ENCODE measurements at regions of chr12 and their contacts with region 1.

Region 1: GRCh38 chr12:74537707-74538385 is at the start of gene ATXN7L3B:
- DNase-seq: peak; percentile 96
- H3K4me3 ChIP-seq: peak within 1 kb of the TSS; percentile 63 to 96 (median 74)
- H3K27ac ChIP-seq: peak within 1 kb of the TSS; percentile 97
- H3K4me1 ChIP-seq: peaks cover 21% of the 10 kb centered on the region
- H3K27me3 ChIP-seq: peaks cover 0 to 1% of the 10 kb centered on the region in 2 experiments
- CTCF ChIP-seq: no peak
- POLR2A ChIP-seq: peak; percentile 61
- total RNA-seq, gene ATXN7L3B: 25.0 and 25.9 TPM in 2 replicates

Region 2: GRCh38 chr12:74337951-74338350 is 199.9 kb before region 1 on chr12:
- CTCF ChIA-PET with region 1: no interaction called
- POLR2A ChIA-PET with region 1: no interaction called
- dilution Hi-C with region 1: no loop called
- intact Hi-C with region 1: loop called (anchors 10 kb)
- DNase-seq: peak; percentile 81
- H3K4me3 ChIP-seq: no peak overlapping the region
- H3K27ac ChIP-seq: peak overlapping the region; percentile 22
- H3K4me1 ChIP-seq: peaks cover 20% of the 10 kb centered on the region
- H3K27me3 ChIP-seq: no peaks in the 10 kb centered on the region
- CTCF ChIP-seq: no peak
- POLR2A ChIP-seq: no peak

Region 3: DNA sequence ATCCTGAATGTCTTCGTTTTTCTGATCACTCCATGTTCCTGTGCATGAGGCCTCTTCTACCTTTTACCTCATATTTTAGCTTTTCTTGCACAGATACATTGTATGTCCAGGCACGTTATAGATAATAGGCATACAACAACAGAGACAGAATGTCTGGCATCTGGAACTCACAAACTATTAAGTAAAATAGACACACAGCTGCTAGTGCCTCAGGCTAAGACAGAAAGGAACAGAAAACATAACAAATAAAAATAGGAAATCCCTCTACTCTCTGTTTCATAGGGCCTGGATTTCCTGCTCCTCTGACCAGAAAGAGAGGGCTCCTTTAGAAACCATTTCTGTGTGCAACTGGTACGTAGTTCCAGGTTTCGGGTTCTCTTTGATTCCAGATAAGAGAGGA is 48.4 kb after region 1 on chr12:
- CTCF ChIA-PET with region 1: no interaction called
- POLR2A ChIA-PET with region 1: no interaction called
- dilution Hi-C with region 1: no loop called
- intact Hi-C with region 1: no loop called
- DNase-seq: no peak
- H3K4me3 ChIP-seq: no peak overlapping the region
- H3K27ac ChIP-seq: no peak overlapping the region
- H3K4me1 ChIP-seq: no peaks in the 10 kb centered on the region
- H3K27me3 ChIP-seq: no peaks in the 10 kb centered on the region
- CTCF ChIP-seq: no peak
- POLR2A ChIP-seq: no peak